ENCODE measurements at regions of chr7 and their contacts with region 1.

Region 1: DNA sequence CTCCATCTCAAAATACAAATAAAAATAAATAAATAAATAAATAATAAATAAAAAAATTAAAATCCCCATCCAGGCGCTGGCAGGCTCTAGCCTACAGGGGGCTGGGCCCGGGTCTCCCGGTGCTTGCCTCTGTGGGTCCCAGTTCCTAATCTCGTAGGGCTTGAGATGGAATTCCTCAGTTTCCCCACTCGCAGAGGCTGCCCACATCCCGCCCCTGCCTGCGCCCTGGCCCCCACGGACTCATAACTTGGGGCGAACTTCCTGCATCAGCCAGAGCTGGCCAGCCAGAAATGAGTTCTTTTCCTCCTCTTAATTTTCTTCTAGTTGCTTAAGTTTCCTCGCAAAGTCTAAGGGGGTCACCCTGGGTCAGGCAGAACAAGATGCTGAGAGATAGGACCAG is 22.0 kb upstream of the SRRM3 start:
- DNase-seq: no peak
- H3K4me3 ChIP-seq: no peak overlapping the region
- H3K27ac ChIP-seq: no peak overlapping the region
- H3K4me1 ChIP-seq: no peaks in the 10 kb centered on the region
- H3K27me3 ChIP-seq: no peaks in the 10 kb centered on the region
- CTCF ChIP-seq: no peak

Region 2: GRCh38 chr7:75808106-75808505 is 371.6 kb before region 1 on chr7:
- intact Hi-C with region 1: no loop called
- DNase-seq: no peak
- H3K4me3 ChIP-seq: no peak overlapping the region
- H3K27ac ChIP-seq: no peak overlapping the region
- H3K4me1 ChIP-seq: no peaks in the 10 kb centered on the region
- H3K27me3 ChIP-seq: no peaks in the 10 kb centered on the region
- CTCF ChIP-seq: no peak

Region 3: DNA sequence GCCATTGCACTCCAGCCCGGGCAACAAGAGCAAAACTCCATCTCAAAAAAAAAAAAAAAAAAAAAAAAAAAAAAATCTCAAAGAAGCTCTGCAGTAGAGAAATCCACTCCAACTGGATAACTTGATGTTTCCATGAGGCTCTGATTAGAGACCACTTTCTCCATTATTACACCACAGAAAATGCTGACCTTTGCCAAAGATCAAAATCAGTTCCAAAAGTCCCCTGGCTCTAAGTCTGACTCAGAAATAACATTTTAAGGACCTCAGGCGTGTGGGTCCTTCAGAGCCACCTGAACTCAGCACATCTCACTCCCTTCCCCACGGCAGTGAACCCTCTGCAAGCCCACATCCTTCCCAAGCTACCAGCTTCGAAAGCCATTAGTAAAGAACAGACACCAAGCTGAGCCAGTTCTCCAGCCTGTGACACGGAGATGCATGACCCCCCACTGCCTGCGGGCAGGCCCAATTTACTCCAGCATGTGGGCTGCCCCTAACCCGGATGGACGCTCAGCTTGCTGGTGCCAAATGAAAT is 171.5 kb before region 1 on chr7:
- intact Hi-C with region 1: no loop called
- DNase-seq: no peak
- H3K4me3 ChIP-seq: no peak overlapping the region
- H3K27ac ChIP-seq: no peak overlapping the region
- H3K4me1 ChIP-seq: peaks cover 4 to 14% of the 10 kb centered on the region in 2 donors
- H3K27me3 ChIP-seq: no peaks in the 10 kb centered on the region
- CTCF ChIP-seq: no peak

Region 4: DNA sequence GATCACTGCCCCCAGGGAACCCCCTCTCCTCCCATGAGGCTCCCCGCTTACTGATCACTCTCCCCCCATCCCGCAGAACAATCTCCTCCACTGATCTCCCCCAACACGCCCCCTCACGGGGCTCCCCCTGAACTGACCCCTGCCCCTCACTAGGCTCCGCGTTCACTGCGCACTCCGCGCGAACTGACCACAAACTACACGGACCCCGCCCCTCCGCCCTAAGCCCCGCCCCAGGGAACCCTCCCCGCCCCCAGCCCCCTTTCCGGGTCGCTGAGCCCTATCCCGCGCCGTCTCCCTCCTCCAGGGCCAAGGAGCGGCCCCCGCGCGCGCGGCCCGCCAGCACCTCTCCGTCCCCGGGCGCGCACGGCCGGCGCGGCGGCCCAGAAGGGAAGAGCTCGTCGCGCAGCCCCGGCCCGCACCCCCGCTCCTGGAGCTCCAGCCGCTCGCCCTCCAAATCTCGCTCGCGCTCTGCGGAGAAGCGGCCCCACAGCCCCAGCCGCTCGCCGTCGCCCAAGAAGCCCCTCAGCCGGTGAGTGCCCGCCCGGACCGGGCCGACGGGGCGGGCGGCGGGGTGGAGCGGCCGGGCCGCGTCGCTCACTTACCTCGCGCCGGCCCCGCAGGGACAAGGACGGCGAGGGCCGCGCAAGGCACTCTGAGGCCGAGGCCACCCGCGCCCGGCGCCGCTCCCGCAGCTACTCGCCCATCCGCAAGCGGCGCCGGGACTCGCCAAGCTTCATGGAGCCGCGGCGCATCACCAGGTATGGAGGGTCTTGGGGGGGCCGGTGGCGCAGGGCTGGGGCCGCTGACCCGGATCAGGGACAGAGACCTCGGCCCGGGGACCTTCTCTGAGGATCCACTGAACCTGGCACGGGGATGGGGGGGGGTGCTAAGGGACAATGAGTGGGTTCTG is 102.9 kb after region 1 on chr7:
- intact Hi-C with region 1: loop called (anchors 2 kb)
- DNase-seq: no peak
- H3K4me3 ChIP-seq: peak overlapping the region; percentile 66 to 70
- H3K27ac ChIP-seq: no peak overlapping the region
- H3K4me1 ChIP-seq: peaks cover 0 to 5% of the 10 kb centered on the region in 2 donors
- H3K27me3 ChIP-seq: no peaks in the 10 kb centered on the region
- CTCF ChIP-seq: no peak

Region 5: GRCh38 chr7:76372984-76373833 is 193.5 kb after region 1 on chr7:
- intact Hi-C with region 1: no loop called
- DNase-seq: peak in 1 of 2 donors; percentile 70
- H3K4me3 ChIP-seq: no peak overlapping the region
- H3K27ac ChIP-seq: no peak overlapping the region
- H3K4me1 ChIP-seq: peaks cover 0 to 2% of the 10 kb centered on the region in 2 donors
- H3K27me3 ChIP-seq: no peaks in the 10 kb centered on the region
- CTCF ChIP-seq: no peak

Measured in ascending aorta (tissue), 2 donors.